ENCODE measurements at regions of chr10 and their contacts with region 1.

Region 1: GRCh38 chr10:16408379-16408778 is 28.4 kb upstream of the PTER start:
- DNase-seq: no peak
- ATAC-seq: no peak

Region 2: DNA sequence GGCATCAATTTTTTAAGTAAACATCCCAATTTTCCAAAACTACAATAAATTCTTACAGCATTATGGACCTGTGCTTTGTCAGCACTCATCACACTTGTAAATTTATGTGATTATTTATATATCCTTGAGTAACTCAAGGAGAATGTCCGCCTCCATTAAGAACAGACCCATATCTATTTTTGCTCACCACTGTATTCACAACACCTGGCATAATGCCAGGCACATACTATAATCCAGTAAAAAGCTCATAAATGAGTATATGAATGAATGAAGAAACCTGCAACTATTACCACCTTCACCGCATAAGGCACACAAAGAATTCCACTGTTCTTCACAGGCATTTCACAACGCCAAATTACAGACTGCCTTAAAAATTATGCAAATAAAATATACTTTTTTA is 595.0 kb before region 1 on chr10:
- intact Hi-C with region 1: no loop called
- DNase-seq: no peak
- ATAC-seq: no peak

Region 3: DNA sequence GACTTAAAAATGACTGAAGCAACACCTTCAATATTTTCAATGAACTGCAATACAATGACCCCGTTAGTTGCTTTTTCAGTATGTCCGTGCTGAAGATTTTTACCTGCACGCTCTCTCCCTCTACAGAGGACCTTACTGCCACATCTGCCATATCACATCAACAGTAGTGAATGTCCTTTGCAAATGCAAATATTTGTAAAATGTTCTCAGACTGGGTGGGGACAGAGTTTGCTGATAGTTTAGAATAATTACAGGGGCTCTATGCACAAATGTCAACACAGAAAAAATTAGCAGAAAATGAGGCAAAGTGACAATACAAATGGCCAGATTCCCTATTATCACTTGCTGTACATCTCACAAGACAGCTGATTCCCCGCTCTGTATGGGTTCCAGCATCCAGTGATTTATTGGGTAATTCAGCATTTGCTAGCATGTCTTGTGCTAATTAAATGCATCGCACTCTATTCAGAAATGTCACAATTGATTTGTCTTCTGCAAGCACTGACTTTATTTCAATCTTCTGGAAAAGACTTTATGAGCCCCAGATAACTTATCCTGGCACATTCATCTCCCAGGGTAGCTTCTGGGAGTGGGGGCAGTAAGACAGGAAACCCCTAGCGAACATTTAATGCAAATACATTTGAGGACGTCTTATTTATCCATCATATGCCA is 40.6 kb before region 1 on chr10:
- intact Hi-C with region 1: no loop called
- DNase-seq: no peak
- ATAC-seq: no peak

Region 4: GRCh38 chr10:16441173-16441840 is 32.9 kb after region 1 on chr10:
- intact Hi-C with region 1: no loop called
- DNase-seq: no peak
- ATAC-seq: no peak

Region 5: DNA sequence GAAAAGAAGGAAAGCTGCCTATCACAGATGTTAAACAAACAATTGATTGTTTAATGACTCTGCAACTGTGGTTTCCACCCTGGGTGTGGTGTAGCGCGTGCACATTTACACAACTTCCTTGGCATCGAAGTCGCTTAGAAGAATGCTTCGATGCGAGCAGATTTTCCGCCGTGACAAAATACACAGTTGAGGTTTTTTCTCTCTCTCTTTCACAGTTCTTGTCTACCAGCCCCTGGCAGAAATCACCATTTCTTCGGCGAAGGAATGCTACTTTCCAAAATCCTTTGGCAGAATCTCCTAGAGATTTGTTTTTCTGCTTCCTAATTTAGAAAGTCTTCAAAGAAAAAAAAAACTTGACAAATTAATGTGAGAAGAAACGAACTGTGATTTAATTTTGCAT is 184.0 kb after region 1 on chr10:
- intact Hi-C with region 1: loop called (anchors 5 kb)
- DNase-seq: no peak
- ATAC-seq: no peak

Measured in Right ventricle myocardium inferior (tissue), 1 donor.